ENCODE measurements at regions of chr20 and their contacts with region 1.

Region 1: GRCh38 chr20:32516583-32517517 is 68.3 kb downstream of the NOL4L start:
- DNase-seq: peak in 1 of 5 donors; percentile 34
- H3K4me3 ChIP-seq: no peak overlapping the region
- H3K4me3 Mint-ChIP-seq: no peak overlapping the region
- H3K27ac ChIP-seq: no peak overlapping the region
- H3K27ac Mint-ChIP-seq: peak overlapping the region in 5 of 8 donors; percentile 52 to 88 (median 68)
- H3K4me1 ChIP-seq: peaks cover 64% of the 10 kb centered on the region
- H3K4me1 Mint-ChIP-seq: peaks cover 50 to 57% (median 54%) of the 10 kb centered on the region in 3 donors
- H3K27me3 ChIP-seq: no peaks in the 10 kb centered on the region
- H3K27me3 Mint-ChIP-seq: no peaks in the 10 kb centered on the region

Region 2: GRCh38 chr20:32031007-32031958 is 485.6 kb before region 1 on chr20:
- CTCF ChIA-PET with region 1: no interaction called
- POLR2A ChIA-PET with region 1: no interaction called
- DNase-seq: peak; percentile 37 to 69 (median 40)
- H3K4me3 ChIP-seq: peak overlapping the region; percentile 8
- H3K4me3 Mint-ChIP-seq: peak overlapping the region in 4 of 7 donors; percentile 25 to 44 (median 32)
- H3K27ac ChIP-seq: no peak overlapping the region
- H3K27ac Mint-ChIP-seq: no peak overlapping the region
- H3K4me1 ChIP-seq: no peaks in the 10 kb centered on the region
- H3K4me1 Mint-ChIP-seq: peaks cover 0 to 4% (median 3%) of the 10 kb centered on the region in 3 donors
- H3K27me3 ChIP-seq: peaks cover 5% of the 10 kb centered on the region
- H3K27me3 Mint-ChIP-seq: peaks cover 8 to 56% of the 10 kb centered on the region in 2 donors

Region 3: DNA sequence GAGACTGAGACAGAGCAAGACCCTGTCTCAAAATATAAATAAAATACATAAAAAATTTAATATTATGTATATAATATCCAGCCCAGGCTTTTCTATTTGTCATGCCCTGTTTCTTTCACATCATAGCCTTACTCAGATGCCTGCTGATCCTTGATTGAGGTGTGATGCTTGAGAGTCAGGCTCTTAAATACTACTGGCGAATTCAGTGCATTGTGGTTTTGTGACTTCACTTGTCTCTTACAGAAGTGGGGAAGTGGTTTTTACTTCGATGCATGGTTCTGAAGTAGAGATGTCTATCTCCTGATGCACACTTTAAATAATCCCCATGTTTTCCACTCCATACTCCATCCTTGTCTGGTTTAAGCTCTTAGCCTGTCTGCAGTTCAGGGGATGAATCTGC is 129.6 kb before region 1 on chr20:
- CTCF ChIA-PET with region 1: no interaction called
- POLR2A ChIA-PET with region 1: no interaction called
- DNase-seq: peak in 3 of 5 donors; percentile 58 to 77 (median 66)
- H3K4me3 ChIP-seq: peak overlapping the region; percentile 5
- H3K4me3 Mint-ChIP-seq: peak overlapping the region in 1 of 7 donors; percentile 3
- H3K27ac ChIP-seq: no peak overlapping the region
- H3K27ac Mint-ChIP-seq: peak overlapping the region; percentile 25 to 71 (median 44)
- H3K4me1 ChIP-seq: peaks cover 27% of the 10 kb centered on the region
- H3K4me1 Mint-ChIP-seq: peaks cover 47 to 78% (median 73%) of the 10 kb centered on the region in 3 donors
- H3K27me3 ChIP-seq: no peaks in the 10 kb centered on the region
- H3K27me3 Mint-ChIP-seq: no peaks in the 10 kb centered on the region

Region 4: DNA sequence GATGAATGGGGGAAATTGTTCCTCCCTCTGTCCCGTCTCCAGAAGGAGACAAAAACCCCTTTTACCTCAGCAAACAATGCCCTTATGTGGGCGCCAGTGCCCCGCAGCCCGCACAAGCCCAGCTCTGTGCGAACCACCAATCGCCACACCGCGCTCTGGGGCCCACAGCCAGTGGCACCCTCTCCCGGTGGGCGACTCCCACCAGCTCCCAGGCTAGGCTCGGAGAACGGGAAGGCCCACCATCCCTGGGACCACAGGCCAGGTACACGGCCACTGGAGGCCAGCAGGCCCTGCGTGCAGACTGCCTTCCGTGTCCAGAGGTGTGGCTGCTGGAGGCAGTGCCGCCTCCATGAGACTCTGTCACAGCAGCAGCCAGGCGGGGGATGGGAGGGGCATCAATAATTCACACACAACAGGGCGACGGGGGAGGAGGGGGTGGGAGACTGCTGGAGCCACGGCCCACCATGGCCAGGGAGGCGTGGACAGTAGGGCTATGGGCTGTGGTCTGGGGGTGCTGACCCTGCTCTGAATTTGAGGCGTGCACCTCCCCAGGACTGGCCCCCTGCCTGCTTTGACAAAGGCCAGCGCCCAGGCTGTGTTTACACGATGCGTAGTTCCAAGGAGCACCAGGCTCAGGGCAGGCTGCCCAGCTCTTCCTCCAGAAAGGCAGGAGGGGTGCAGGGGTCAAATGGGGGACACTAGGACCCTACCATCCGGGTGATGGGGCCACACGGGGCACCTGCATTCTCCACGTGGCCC is 53.0 kb before region 1 on chr20:
- CTCF ChIA-PET with region 1: no interaction called
- POLR2A ChIA-PET with region 1: no interaction called
- DNase-seq: no peak
- H3K4me3 ChIP-seq: no peak overlapping the region
- H3K4me3 Mint-ChIP-seq: no peak overlapping the region
- H3K27ac ChIP-seq: no peak overlapping the region
- H3K27ac Mint-ChIP-seq: no peak overlapping the region
- H3K4me1 ChIP-seq: no peaks in the 10 kb centered on the region
- H3K4me1 Mint-ChIP-seq: peaks cover 0 to 10% (median 4%) of the 10 kb centered on the region in 3 donors
- H3K27me3 ChIP-seq: no peaks in the 10 kb centered on the region
- H3K27me3 Mint-ChIP-seq: peaks cover 0 to 2% of the 10 kb centered on the region in 2 donors

Region 5: DNA sequence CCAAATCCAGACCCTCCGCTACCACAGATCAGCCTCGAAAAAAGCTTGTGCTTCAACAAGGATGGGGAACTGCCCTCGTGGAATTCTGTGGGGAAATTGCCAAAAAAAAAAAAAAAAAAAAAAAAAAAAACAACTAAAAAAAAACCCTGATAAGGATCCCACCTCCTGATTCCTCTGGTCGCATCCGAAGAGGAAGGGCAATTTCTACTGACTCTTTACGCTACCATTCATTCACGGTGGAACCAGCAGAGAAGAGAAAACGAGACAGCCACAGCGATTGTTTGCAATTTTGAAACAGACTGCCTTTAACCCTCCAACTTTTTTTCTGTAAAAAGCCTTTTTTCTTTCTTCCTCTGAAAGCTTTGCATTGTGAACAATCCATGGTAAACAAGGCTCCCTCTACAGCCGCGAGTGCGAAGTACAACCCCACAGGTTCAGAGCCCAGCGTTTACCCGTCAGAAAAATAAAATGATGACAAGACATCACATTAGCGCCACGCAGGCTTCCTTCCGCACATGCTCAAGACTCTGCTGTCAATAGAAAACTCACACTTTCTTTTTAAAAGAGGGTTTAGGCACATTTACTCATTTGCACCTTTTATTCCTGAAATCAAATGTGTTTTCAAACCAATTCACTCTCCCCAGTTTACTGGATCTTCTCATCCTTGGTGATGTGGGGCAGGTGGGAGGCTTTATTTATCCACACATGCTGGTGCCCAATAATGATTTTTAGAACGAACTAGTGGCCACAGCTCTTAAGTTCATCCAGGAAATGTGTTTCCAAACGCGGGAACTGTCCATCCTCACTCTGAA is 31.7 kb before region 1 on chr20:
- CTCF ChIA-PET with region 1: no interaction called
- POLR2A ChIA-PET with region 1: interaction called, 13 read pairs
- DNase-seq: peak; percentile 61 to 89 (median 77)
- H3K4me3 ChIP-seq: peak overlapping the region; percentile 69
- H3K4me3 Mint-ChIP-seq: peak overlapping the region; percentile 88 to 96 (median 93)
- H3K27ac ChIP-seq: no peak overlapping the region
- H3K27ac Mint-ChIP-seq: peak overlapping the region; percentile 87 to 97 (median 92)
- H3K4me1 ChIP-seq: peaks cover 39% of the 10 kb centered on the region
- H3K4me1 Mint-ChIP-seq: peaks cover 30 to 48% (median 38%) of the 10 kb centered on the region in 3 donors
- H3K27me3 ChIP-seq: no peaks in the 10 kb centered on the region
- H3K27me3 Mint-ChIP-seq: no peaks in the 10 kb centered on the region

Measured in CD8-positive, alpha-beta memory T cell (primary cell).